Activated CD4-positive, alpha-beta T cell treated with anti-CD3 and anti-CD28 coated beads, Interleukin-2, amount 10 ng/mL, durations not matched to agents 24 days and 14 days (primary cell): ENCODE measurements at regions of chr6 and their contacts with region 1.

Region 1: DNA sequence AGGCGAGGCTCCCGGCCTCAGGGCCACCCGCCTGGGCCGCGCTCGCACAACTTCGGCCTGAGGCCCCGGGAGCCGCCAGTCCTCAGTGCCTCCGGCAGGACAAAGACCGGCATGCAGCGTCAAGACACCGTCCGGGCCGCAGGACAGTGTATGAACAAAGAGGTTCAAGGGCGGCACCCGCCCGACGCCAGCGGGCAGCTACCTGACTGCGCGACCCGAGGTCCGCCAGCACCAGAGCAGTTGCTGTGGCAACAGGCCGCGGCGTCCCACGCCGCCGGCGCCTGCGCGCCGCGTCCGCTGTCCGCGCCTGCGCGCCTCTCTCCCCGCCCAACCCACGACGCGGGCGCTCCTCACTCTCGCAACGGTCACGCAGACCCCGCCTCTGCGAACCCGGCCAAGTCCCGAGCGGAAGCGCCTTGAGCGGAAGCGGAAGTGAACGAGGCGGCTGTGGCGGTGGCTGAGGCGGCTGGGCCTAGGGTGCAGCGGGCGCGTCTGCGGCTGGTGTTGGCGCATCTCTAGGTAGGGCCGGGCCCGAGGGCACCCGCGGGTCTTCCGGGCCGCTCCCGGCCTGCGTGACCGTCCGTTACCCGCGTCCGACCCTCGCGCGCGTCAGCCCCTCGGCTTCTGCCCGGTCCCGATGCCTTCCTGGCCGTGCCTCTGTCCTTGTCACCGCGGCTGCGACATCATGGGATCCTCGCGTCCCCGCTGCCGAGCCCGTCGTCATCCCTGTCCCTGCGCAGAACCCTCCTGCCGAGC is at the start of gene FAM120B:
- DNase-seq: peak; percentile 99
- H3K4me3 Mint-ChIP-seq: peak within 1 kb of the TSS; percentile 94
- H3K27ac Mint-ChIP-seq: peak within 1 kb of the TSS; percentile 94
- H3K4me1 Mint-ChIP-seq: peaks cover 31% of the 10 kb centered on the region
- H3K27me3 Mint-ChIP-seq: peaks cover 36% of the 10 kb centered on the region
- total RNA-seq, gene FAM120B: 18.7 and 19.3 TPM in 2 replicates

Region 2: DNA sequence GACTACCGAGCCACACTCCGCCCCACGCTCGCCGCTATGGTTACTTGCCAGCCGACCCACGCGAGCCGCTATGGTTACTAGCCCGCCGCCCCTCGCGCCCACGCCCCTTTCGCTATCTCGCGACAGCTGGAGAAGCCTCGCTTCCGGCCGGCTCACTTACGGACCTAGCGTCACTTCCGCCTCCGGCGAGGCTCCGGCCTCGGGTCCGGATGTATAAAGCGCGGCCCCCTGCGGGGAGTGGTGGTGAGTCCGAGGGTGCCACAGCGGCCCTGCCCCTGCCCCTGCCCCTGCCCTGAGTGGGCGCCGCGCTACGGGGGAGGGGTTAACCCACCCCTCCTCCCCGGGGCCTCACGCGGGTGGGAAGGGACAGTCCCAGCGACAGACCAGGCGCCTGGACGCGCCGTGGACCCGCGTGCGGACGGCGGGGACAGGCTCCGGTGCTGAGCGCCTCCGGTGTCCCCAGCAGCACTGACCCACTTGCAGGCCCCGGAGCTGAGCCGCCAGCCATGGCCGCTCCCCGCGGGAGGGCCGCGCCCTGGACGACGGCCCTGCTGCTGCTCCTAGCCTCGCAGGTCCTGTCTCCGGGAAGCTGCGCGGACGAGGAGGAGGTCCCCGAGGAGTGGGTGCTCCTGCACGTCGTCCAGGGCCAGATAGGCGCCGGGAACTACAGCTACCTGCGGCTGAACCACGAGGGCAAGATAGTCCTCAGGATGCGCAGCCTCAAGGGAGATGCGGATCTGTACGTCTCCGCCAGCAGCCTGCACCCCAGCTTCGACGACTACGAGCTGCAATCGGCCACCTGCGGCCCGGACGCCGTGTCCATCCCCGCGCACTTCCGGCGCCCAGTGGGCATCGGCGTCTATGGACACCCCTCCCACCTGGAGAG is 604.3 kb before region 1 on chr6 and contains the starts of genes C6orf120 and WDR27:
- intact Hi-C with region 1: loop called (anchors 5 kb)
- DNase-seq: peak; percentile 99
- H3K4me3 Mint-ChIP-seq: peak within 1 kb of the TSS; percentile 94
- H3K27ac Mint-ChIP-seq: peak within 1 kb of the TSS; percentile 89
- H3K4me1 Mint-ChIP-seq: peaks cover 29% of the 10 kb centered on the region
- H3K27me3 Mint-ChIP-seq: no peaks in the 10 kb centered on the region
- total RNA-seq, gene C6orf120: 23.2 and 23.8 TPM in 2 replicates
- total RNA-seq, gene WDR27: 29.0 and 33.3 TPM in 2 replicates

Region 3: GRCh38 chr6:170087941-170088581 is 218.4 kb before region 1 on chr6:
- intact Hi-C with region 1: loop called (anchors 5 kb)
- DNase-seq: peak; percentile 90
- H3K4me3 Mint-ChIP-seq: peak overlapping the region; percentile 91
- H3K27ac Mint-ChIP-seq: peak overlapping the region; percentile 98
- H3K4me1 Mint-ChIP-seq: peaks cover 34% of the 10 kb centered on the region
- H3K27me3 Mint-ChIP-seq: peaks cover 2% of the 10 kb centered on the region

Region 4: GRCh38 chr6:170347091-170347490 is 40.6 kb after region 1 on chr6:
- intact Hi-C with region 1: loop called (anchors 2 kb)
- DNase-seq: no peak
- H3K4me3 Mint-ChIP-seq: peak overlapping the region; percentile 48
- H3K27ac Mint-ChIP-seq: peak overlapping the region; percentile 54
- H3K4me1 Mint-ChIP-seq: peaks cover 33% of the 10 kb centered on the region
- H3K27me3 Mint-ChIP-seq: no peaks in the 10 kb centered on the region

Region 5: GRCh38 chr6:170529839-170530469 is 223.5 kb after region 1 on chr6:
- intact Hi-C with region 1: loop called (anchors 10 kb)
- DNase-seq: peak; percentile 89
- H3K4me3 Mint-ChIP-seq: no peak overlapping the region
- H3K27ac Mint-ChIP-seq: no peak overlapping the region
- H3K4me1 Mint-ChIP-seq: peaks cover 6% of the 10 kb centered on the region
- H3K27me3 Mint-ChIP-seq: peaks cover 10% of the 10 kb centered on the region

Region 6: DNA sequence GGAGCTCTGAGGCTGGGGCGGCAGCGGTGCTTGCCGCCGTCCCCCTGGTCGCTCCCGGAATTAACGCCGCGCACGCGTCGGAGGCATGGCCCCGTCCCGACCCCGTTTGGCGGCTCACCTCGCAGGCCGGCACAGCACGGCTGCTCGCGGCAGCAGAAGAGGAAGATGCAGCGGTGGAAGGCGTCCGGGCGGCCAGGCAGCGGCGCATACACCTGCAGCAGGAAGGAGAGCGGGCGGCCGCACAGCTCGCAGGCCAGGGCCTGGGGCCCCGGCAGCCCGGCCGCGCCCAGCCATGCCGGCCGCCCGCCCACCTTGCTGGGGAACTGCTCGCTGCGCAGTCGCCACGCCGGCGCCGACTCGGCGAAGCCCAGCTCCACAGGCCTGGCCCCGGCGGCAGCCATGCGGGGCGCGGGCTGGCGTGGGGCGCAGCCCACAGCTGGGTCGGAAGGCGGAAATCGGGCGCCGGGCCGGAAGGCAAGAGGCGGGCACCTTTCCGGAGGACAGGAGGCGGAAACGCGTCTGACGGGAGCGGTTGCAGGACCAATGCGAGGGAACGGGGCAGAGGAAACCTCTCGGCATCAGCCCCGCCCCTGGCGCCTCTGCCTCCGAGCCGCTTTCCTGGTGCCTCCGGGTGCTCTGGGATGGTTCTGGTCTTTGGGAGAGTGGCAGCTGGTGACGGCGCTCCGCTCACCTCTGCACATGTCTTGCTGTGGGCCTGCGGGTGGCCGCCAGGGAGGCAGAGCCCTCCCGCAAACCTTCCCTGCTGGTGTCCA is 277.9 kb after region 1 on chr6 and contains the start of gene PDCD2:
- intact Hi-C with region 1: loop called (anchors 5 kb)
- DNase-seq: peak; percentile 98
- H3K4me3 Mint-ChIP-seq: peak within 1 kb of the TSS; percentile 100
- H3K27ac Mint-ChIP-seq: peak within 1 kb of the TSS; percentile 97
- H3K4me1 Mint-ChIP-seq: peaks cover 24% of the 10 kb centered on the region
- H3K27me3 Mint-ChIP-seq: peaks cover 3% of the 10 kb centered on the region
- total RNA-seq, gene PDCD2: 138 and 139 TPM in 2 replicates